Thyroid gland (tissue), 4 donors: ENCODE measurements at regions of chr16 and their contacts with region 1.

Region 1: GRCh38 chr16:10964039-10964890 is 19.9 kb downstream of the CLEC16A start:
- DNase-seq: peak; percentile 81 to 86
- H3K4me3 ChIP-seq: no peak overlapping the region
- H3K27ac ChIP-seq: peak overlapping the region in 1 of 3 donors; percentile 8
- H3K4me1 ChIP-seq: no peaks in the 10 kb centered on the region
- H3K27me3 ChIP-seq: no peaks in the 10 kb centered on the region
- CTCF ChIP-seq: peak; percentile 82 to 97 (median 90)
- POLR2A ChIP-seq: no peak

Region 2: GRCh38 chr16:10876799-10877341 is 87.4 kb before region 1 on chr16 and contains the start of gene CIITA:
- intact Hi-C with region 1: no loop called
- DNase-seq: peak; percentile 49 to 52
- H3K4me3 ChIP-seq: no peak within 1 kb of the TSS
- H3K27ac ChIP-seq: no peak within 1 kb of the TSS
- H3K4me1 ChIP-seq: peaks cover 8 to 18% of the 10 kb centered on the region in 2 donors
- H3K27me3 ChIP-seq: no peaks in the 10 kb centered on the region
- CTCF ChIP-seq: no peak
- POLR2A ChIP-seq: no peak
- total RNA-seq, gene CIITA: 1.8 to 14.3 (median 10.0) TPM

Region 3: DNA sequence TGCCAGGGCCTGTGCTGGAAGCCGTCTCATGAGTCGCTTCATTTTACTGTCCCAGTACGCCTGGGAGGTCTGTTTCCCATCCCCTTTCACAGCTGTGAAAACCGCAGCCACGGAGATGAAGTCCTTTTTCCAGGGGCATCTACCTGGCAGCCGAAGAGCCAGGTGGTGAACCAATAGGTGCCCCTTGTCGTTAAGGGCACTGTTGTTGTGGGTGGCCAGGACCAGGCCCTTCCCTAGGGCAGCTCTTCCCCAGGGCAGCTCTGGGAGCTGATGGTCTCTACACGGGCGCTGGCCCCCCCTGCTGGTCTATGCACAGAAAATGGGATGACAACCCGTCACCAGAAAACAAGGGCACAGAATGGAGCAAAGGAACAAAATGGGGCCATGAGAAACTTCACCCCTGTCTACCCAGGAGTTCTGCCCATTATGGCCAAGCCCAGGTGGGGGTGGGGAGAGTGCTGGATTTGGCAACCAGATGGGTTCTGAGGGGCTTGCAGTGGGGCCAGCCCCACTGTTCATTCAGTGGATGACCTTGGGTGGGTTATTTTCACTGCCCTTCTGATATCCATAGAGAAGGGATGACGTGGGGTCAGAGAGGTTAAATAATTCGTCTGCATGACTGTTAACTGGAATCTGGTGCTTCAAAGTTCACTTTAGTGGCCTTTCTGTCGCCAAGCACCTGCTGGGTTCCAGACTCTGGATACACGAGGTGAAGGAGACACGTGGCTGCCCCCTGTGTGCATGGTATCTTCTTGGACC is 392.5 kb after region 1 on chr16:
- intact Hi-C with region 1: loop called (anchors 5 kb)
- DNase-seq: peak; percentile 71 to 78
- H3K4me3 ChIP-seq: no peak overlapping the region
- H3K27ac ChIP-seq: no peak overlapping the region
- H3K4me1 ChIP-seq: peaks cover 0 to 16% of the 10 kb centered on the region in 2 donors
- H3K27me3 ChIP-seq: no peaks in the 10 kb centered on the region
- CTCF ChIP-seq: peak; percentile 23 to 58 (median 51)
- POLR2A ChIP-seq: no peak